ENCODE measurements at regions of chr5 and their contacts with region 1.

Region 1: GRCh38 chr5:154467655-154468354 is 10.2 kb downstream of the HAND1 start:
- DNase-seq: no peak
- H3K4me3 ChIP-seq: no peak overlapping the region
- H3K27ac ChIP-seq: no peak overlapping the region
- H3K4me1 ChIP-seq: no peaks in the 10 kb centered on the region
- H3K27me3 ChIP-seq: no peaks in the 10 kb centered on the region
- CTCF ChIP-seq: peak; percentile 59 to 89 (median 78)
- POLR2A ChIP-seq: no peak

Region 2: GRCh38 chr5:154603978-154604679 is 136.3 kb after region 1 on chr5:
- intact Hi-C with region 1: loop called (anchors 10 kb)
- DNase-seq: no peak
- H3K4me3 ChIP-seq: no peak overlapping the region
- H3K27ac ChIP-seq: no peak overlapping the region
- H3K4me1 ChIP-seq: peaks cover 7% of the 10 kb centered on the region
- H3K27me3 ChIP-seq: no peaks in the 10 kb centered on the region
- CTCF ChIP-seq: no peak
- POLR2A ChIP-seq: no peak